ENCODE measurements at regions of chr17 and their contacts with region 1.

Region 1: GRCh38 chr17:32486111-32486700 is 587 bp upstream of the CDK5R1 start:
- DNase-seq: peak; percentile 72 to 87 (median 74)
- ATAC-seq: peak; percentile 49 to 83 (median 72)
- H3K4me3 ChIP-seq: peak overlapping the region in 11 of 12 donors; percentile 22 to 86 (median 62)
- H3K27ac ChIP-seq: peak overlapping the region; percentile 42 to 81 (median 73)
- H3K4me1 ChIP-seq: peaks cover 4 to 44% (median 27%) of the 10 kb centered on the region in 12 donors
- H3K27me3 ChIP-seq: no peaks in the 10 kb centered on the region
- CTCF ChIP-seq: no peak
- POLR2A ChIP-seq: peak in 1 of 2 donors; percentile 26

Region 2: GRCh38 chr17:32609085-32609484 is 122.9 kb after region 1 on chr17:
- intact Hi-C with region 1: loop called in 5 of 10 experiments (anchors 2 to 10 kb)
- DNase-seq: peak; percentile 43 to 80 (median 57)
- ATAC-seq: peak; percentile 61 to 81 (median 74)
- H3K4me3 ChIP-seq: no peak overlapping the region
- H3K27ac ChIP-seq: no peak overlapping the region
- H3K4me1 ChIP-seq: no peaks in the 10 kb centered on the region
- H3K27me3 ChIP-seq: no peaks in the 10 kb centered on the region
- CTCF ChIP-seq: peak; percentile 10 to 48 (median 32)
- POLR2A ChIP-seq: no peak

Region 3: GRCh38 chr17:32659419-32659842 is 173.2 kb after region 1 on chr17:
- intact Hi-C with region 1: loop called in 5 of 10 experiments (anchors 5 to 10 kb)
- DNase-seq: peak; percentile 52 to 68 (median 63)
- ATAC-seq: peak; percentile 44 to 87 (median 83)
- H3K4me3 ChIP-seq: no peak overlapping the region
- H3K27ac ChIP-seq: no peak overlapping the region
- H3K4me1 ChIP-seq: peaks cover 0 to 21% (median 8%) of the 10 kb centered on the region in 12 donors
- H3K27me3 ChIP-seq: no peaks in the 10 kb centered on the region
- CTCF ChIP-seq: peak; percentile 78 to 94 (median 90)
- POLR2A ChIP-seq: no peak

Region 4: GRCh38 chr17:32755045-32755805 is 269.0 kb after region 1 on chr17:
- intact Hi-C with region 1: loop called in 9 of 10 experiments (anchors 2 to 5 kb)
- DNase-seq: no peak
- ATAC-seq: peak in 3 of 4 donors; percentile 63 to 69 (median 64)
- H3K4me3 ChIP-seq: no peak overlapping the region
- H3K27ac ChIP-seq: no peak overlapping the region
- H3K4me1 ChIP-seq: peaks cover 0 to 5% (median 0%) of the 10 kb centered on the region in 12 donors
- H3K27me3 ChIP-seq: no peaks in the 10 kb centered on the region
- CTCF ChIP-seq: peak; percentile 16 to 71 (median 53)
- POLR2A ChIP-seq: no peak

Measured in heart left ventricle (tissue), 16 donors.